Left cardiac atrium (tissue), 4 donors: ENCODE measurements at regions of chr4 and their contacts with region 1.

Region 1: DNA sequence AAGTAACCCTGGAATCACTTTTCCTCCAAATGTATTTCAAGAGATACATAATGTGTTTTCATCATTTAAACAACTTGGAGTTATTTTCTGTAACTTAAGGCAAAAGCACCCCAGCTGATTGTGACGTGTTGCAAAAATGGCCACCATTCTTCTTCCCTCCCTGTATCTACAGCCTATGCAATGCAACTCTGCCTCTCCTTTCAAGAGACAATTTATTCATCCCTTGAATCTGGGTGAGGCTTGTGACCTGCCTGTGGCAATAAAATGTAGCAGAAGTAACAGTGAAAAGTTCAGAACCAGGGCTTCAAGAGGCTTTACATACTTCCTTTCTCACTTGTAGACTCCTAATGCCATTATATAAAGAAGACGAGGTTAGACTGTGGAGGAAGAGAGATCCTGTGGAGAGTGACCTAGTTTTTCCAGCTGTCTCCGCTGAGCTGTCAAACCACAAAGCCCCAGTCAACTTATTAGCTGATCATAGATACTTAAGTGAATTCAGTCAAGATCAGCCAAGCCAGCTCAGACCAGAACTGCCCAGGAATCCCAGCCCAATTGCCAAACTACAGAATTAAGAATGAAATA is 81.0 kb upstream of the KLF3 start:
- DNase-seq: no peak
- ATAC-seq: peak in 1 of 2 donors; percentile 48

Region 2: GRCh38 chr4:38275331-38276100 is 307.5 kb before region 1 on chr4:
- intact Hi-C with region 1: no loop called
- DNase-seq: no peak
- ATAC-seq: no peak

Region 3: GRCh38 chr4:38647101-38647819 is 64.3 kb after region 1 on chr4:
- intact Hi-C with region 1: loop called in 1 of 2 experiments (anchors 10 kb)
- DNase-seq: no peak
- ATAC-seq: no peak